ENCODE measurements at regions of chr9 and their contacts with region 1.

Region 1: GRCh38 chr9:84419031-84419602 is 78.6 kb upstream of the SLC28A3 start:
- DNase-seq: no peak
- H3K4me3 ChIP-seq: no peak overlapping the region
- H3K27ac ChIP-seq: no peak overlapping the region
- H3K4me1 ChIP-seq: no peaks in the 10 kb centered on the region
- H3K27me3 ChIP-seq: no peaks in the 10 kb centered on the region
- CTCF ChIP-seq: peak in 2 of 3 experiments; percentile 52 to 56; a peak in 3 of 4 replicates
- EP300 ChIP-seq: no peak
- POLR2A ChIP-seq: no peak
- RAD21 ChIP-seq: peak; percentile 60 to 70

Region 2: DNA sequence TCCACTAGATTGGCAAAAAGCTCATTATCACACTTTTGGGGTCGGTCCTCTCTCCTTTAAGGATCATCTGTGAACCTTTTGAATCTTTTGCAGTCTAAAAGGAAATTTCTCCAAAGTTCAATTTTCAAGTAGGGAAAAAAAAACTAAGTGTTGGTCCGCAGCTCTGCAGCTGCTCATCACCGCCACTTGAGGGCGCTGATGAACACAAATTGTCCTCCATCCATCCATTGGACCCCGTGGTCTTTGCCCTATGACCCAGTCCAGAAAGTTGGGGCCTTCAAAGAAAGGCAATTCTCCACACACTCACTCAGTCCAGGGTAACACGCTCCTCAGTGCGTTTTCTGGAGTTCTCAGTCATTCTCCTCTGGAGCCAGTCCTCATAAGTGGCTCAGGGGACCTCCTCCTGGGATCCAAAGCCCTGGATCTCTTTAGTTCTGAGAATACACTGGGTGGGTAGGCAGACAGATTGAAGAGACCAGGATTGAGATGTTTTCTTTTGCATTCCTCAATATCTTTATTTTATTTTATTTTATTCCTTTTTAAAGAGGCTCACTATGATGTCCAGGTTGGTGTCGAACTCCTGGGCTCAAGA is 14.9 kb before region 1 on chr9:
- CTCF ChIA-PET with region 1: interaction called, 15 read pairs
- POLR2A ChIA-PET with region 1: interaction called, 3 read pairs
- DNase-seq: peak in 1 of 2 experiments; percentile 52
- H3K4me3 ChIP-seq: no peak overlapping the region
- H3K27ac ChIP-seq: no peak overlapping the region
- H3K4me1 ChIP-seq: no peaks in the 10 kb centered on the region
- H3K27me3 ChIP-seq: no peaks in the 10 kb centered on the region
- CTCF ChIP-seq: peak; percentile 72 to 80 (median 76)
- EP300 ChIP-seq: no peak
- POLR2A ChIP-seq: no peak
- RAD21 ChIP-seq: peak; percentile 83 to 84

Region 3: GRCh38 chr9:84435902-84436301 is 16.8 kb after region 1 on chr9:
- CTCF ChIA-PET with region 1: interaction called, 13 read pairs
- POLR2A ChIA-PET with region 1: no interaction called
- DNase-seq: no peak
- H3K4me3 ChIP-seq: no peak overlapping the region
- H3K27ac ChIP-seq: no peak overlapping the region
- H3K4me1 ChIP-seq: no peaks in the 10 kb centered on the region
- H3K27me3 ChIP-seq: no peaks in the 10 kb centered on the region
- CTCF ChIP-seq: no peak
- EP300 ChIP-seq: no peak
- POLR2A ChIP-seq: no peak
- RAD21 ChIP-seq: no peak